ENCODE measurements at regions of chr5 and their contacts with region 1.

Region 1: GRCh38 chr5:75717082-75717922 is at the start of gene POC5:
- DNase-seq: peak; percentile 98
- H3K4me3 Mint-ChIP-seq: peak within 1 kb of the TSS; percentile 99
- H3K27ac Mint-ChIP-seq: peak within 1 kb of the TSS; percentile 99
- H3K4me1 Mint-ChIP-seq: peaks cover 30% of the 10 kb centered on the region
- H3K27me3 Mint-ChIP-seq: no peaks in the 10 kb centered on the region
- total RNA-seq, gene POC5: 17.5 to 17.7 TPM

Region 2: DNA sequence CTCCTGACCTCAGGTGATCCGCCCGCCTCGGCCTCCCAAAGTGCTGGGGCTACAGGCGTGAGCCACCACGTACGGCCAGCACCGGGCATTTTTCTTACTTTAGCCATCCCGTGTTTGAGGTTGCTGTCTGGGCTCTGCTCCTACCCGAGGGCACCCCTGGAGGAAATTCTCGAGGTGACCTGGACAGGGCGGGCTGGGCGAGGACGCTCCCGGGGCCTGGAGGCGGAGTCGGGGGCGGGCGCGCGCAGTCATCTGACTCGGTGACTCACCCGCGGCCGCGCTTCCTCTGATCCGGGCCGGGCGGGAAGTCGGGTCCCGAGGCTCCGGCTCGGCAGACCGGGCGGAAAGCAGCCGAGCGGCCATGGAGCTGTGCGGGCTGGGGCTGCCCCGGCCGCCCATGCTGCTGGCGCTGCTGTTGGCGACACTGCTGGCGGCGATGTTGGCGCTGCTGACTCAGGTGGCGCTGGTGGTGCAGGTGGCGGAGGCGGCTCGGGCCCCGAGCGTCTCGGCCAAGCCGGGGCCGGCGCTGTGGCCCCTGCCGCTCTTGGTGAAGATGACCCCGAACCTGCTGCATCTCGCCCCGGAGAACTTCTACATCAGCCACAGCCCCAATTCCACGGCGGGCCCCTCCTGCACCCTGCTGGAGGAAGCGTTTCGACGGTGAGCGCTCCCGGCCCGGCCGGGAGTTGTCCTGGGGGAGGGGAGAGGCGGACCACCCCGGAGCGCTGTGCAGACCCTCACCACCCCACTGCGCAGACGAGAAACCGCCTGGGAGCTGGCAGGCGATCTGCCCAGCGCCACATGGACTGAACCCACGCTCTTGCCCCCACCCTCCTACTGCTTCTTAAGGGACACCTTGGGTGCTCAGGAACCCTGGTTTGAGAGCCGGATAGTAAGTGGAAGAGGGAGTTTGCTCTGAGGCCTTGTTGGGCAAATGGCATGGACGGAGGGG is 1032.1 kb before region 1 on chr5 and contains the start of gene HEXB:
- CTCF ChIA-PET with region 1: no interaction called
- intact Hi-C with region 1: loop called (anchors 10 kb)
- DNase-seq: peak; percentile 92
- H3K4me3 Mint-ChIP-seq: peak within 1 kb of the TSS; percentile 71
- H3K27ac Mint-ChIP-seq: peak within 1 kb of the TSS; percentile 6
- H3K4me1 Mint-ChIP-seq: peaks cover 23% of the 10 kb centered on the region
- H3K27me3 Mint-ChIP-seq: no peaks in the 10 kb centered on the region
- total RNA-seq, gene HEXB: 65.6 to 70.0 TPM

Region 3: DNA sequence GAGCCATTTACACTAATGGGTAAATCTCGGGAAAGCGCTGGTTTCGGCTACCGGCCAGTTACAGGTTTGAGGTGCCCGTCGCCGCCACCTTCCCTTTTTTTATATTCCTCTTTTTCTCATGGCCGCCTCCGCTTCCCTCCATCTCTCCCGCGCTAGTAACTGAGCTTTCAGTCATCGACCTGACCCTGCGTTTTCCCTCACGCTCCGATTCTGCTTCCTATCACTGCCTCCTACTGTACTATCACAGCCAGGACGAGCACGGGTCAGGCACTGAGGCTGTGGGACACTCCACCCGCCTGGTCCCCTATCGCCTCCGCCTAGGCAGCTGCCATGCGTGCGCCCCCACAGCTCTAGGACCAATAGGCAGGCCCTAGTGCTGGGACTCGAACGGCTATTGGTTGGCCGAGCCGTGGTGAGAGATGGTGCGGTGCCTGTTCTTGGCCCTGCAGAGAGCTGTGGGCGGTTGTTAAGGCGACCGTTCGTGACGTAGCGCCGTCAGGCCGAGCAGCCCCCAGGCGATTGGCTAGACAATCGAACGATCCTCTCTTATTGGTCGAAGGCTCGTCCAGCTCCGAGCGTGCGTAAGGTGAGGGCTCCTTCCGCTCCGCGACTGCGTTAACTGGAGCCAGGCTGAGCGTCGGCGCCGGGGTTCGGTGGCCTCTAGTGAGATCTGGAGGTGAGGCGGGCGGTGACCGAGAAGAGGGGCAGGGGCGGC is 380.5 kb before region 1 on chr5 and contains the start of gene HMGCR:
- CTCF ChIA-PET with region 1: no interaction called
- intact Hi-C with region 1: loop called (anchors 1 kb)
- DNase-seq: peak; percentile 99
- H3K4me3 Mint-ChIP-seq: no peak within 1 kb of the TSS
- H3K27ac Mint-ChIP-seq: no peak within 1 kb of the TSS
- H3K4me1 Mint-ChIP-seq: peaks cover 35% of the 10 kb centered on the region
- H3K27me3 Mint-ChIP-seq: no peaks in the 10 kb centered on the region
- total RNA-seq, gene HMGCR: 61.7 to 67.5 TPM

Region 4: GRCh38 chr5:75566710-75567309 is 150.5 kb before region 1 on chr5:
- CTCF ChIA-PET with region 1: no interaction called
- intact Hi-C with region 1: loop called (anchors 2 kb)
- DNase-seq: peak; percentile 84
- H3K4me3 Mint-ChIP-seq: peak overlapping the region; percentile 48
- H3K27ac Mint-ChIP-seq: peak overlapping the region; percentile 95
- H3K4me1 Mint-ChIP-seq: peaks cover 55% of the 10 kb centered on the region
- H3K27me3 Mint-ChIP-seq: no peaks in the 10 kb centered on the region

Region 5: DNA sequence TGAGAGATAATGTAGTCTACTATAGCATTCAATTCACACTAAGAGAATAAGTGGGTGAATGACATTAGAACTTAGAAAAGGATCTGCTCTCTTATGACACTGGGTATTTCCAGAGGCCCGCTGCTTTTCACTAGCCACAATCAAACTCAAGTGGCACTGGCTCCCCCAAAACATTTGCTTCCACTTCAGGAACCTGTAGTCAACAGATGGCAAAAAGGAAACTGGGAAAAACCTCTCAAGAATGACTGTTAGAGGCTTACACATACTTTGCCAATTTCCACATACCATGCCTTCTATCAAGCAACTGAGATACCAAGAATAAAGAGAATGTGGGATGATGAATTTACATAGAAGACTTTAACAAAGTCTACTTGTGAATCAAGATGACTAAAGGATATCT is 11.3 kb before region 1 on chr5:
- CTCF ChIA-PET with region 1: no interaction called
- intact Hi-C with region 1: no loop called
- DNase-seq: no peak
- H3K4me3 Mint-ChIP-seq: no peak overlapping the region
- H3K27ac Mint-ChIP-seq: no peak overlapping the region
- H3K4me1 Mint-ChIP-seq: peaks cover 15% of the 10 kb centered on the region
- H3K27me3 Mint-ChIP-seq: no peaks in the 10 kb centered on the region

Region 6: DNA sequence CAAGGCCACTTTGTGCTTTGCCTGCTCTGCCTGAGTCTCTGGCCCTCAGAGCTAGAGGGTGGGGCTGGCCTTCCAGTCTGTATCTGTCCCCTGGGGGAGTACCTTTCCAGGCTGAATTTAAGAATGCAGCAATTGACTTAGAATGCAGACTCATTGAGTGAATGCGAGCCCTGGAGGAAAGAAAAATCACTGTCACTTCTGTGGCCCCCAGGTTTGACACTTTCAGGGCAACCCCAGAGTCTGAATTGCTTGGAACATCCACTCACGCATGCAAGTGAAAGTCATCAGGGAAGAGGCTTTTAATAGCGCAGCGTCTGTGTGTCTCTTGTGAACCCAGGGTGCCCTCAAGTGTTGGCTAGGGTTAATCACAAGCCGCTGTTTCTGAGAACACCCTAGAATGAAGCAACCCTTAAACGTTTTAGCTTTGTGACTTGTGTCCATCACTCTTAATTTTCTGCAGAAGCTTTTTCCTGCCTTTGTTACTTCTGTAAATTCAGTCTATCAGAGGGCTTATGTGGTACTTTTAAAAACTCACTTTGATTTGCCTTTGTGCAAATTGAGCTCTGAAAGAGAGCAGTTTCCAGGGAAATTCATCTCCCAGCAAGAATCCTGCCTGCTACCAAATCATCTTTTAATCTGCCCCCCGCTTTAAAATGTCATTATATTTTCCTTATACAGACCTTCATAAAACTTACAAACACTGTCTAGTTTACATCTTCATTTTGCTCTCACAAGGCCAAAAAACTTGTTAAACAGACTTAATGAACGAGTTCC is 539.0 kb after region 1 on chr5:
- CTCF ChIA-PET with region 1: no interaction called
- intact Hi-C with region 1: loop called (anchors 5 kb)
- DNase-seq: peak; percentile 79
- H3K4me3 Mint-ChIP-seq: no peak overlapping the region
- H3K27ac Mint-ChIP-seq: no peak overlapping the region
- H3K4me1 Mint-ChIP-seq: peaks cover 2% of the 10 kb centered on the region
- H3K27me3 Mint-ChIP-seq: peaks cover 3% of the 10 kb centered on the region

Region 7: DNA sequence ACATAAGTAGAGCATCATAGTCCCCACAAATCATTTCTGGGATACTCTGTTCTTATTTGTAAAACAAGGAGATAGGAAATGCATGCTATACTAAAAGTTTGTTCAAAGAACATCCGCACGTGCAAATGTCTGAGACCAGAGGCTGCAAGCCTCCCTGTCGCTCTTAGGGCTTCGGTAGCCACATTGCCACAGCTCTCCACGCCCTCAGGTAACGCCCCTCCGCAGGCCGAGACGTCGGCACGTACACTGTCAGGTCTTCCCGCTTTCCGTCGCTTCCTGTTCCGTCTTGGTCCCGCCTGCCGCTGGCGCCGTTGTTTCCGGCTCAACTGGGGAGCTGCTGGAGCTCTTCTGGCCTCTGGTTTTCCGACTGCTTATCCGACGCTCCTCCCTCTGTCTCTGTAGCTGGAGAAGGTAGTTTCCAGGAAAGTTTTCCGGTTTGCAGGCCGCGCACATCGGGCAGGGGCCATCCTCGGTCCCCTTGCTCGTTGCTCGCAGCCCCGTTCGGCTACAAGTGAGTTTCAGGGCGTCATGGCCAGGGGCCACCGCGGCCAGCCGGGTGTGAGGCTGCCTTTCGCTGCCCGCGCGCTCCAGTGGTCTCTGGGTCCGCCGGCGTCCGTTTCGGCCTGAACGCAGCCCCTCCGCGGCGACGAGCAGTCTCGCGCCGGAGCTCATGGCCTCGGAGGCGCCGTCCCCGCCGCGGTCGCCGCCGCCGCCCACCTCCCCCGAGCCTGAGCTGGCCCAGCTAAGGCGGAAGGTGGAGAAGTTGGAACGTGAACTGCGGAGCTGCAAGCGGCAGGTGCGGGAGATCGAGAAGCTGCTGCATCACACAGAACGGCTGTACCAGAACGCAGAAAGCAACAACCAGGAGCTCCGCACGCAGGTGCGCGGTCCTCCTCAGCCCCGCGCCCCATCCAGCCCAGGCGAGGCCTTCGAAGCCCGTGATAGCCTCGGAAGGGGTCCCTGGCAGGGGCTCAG is 1313.1 kb after region 1 on chr5 and contains the start of gene AGGF1:
- CTCF ChIA-PET with region 1: no interaction called
- intact Hi-C with region 1: loop called (anchors 1 kb)
- DNase-seq: peak; percentile 96
- H3K4me3 Mint-ChIP-seq: peak within 1 kb of the TSS; percentile 91
- H3K27ac Mint-ChIP-seq: peak within 1 kb of the TSS; percentile 88
- H3K4me1 Mint-ChIP-seq: peaks cover 23% of the 10 kb centered on the region
- H3K27me3 Mint-ChIP-seq: no peaks in the 10 kb centered on the region
- total RNA-seq, gene AGGF1: 20.3 to 23.0 TPM